HCT116 (cell line): ENCODE measurements at regions of chr11 and their contacts with region 1.

Region 1: GRCh38 chr11:128905345-128906184 is 14.4 kb downstream of the KCNJ5 start:
- DNase-seq: peak; percentile 46
- ATAC-seq: peak; percentile 75
- H3K4me3 ChIP-seq: peak overlapping the region; percentile 58 to 69
- H3K27ac ChIP-seq: peak overlapping the region; percentile 23; the same call in 1 of the 2 replicates
- H3K4me1 ChIP-seq: peaks cover 23 to 42% of the 10 kb centered on the region in 2 experiments
- H3K27me3 ChIP-seq: no peaks in the 10 kb centered on the region
- CTCF ChIP-seq: peak; percentile 24 to 70 (median 61); a peak in 5 of 6 replicates
- POLR2A ChIP-seq: no peak
- RAD21 ChIP-seq: peak; percentile 35

Region 2: DNA sequence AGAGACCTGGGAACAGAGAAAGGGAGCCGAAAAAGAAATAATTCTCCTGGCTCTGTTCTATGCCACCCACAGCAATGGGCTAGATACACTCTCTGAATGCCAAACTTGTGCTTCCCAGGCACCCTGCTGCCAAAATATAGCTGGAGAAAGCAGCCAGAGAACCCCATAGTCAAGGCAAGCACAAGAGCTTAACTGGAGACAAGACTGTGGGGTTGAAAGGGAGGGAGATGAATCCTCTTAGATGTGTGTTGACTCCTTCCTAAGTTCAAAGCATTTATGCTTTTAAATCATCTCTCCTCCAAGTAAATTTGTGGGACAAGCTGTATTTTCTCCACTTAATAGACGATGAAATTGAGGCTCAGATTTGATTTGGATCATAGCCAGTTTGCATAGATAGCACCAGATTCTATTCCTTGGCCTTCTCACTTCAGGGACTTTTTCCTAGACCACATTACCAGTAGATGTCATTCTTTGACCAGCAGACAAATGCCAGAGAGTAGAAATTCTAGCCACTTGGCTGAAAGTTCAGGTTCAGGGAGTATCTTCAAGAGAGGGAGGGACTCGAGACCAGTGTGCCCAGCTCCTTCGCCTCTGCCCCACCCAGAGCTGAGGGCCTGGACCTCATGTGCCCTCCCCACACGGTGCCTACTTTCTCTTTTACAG is 301.7 kb before region 1 on chr11:
- CTCF ChIA-PET with region 1: no interaction called
- POLR2A ChIA-PET with region 1: no interaction called
- RAD21 ChIA-PET with region 1: no interaction called
- intact Hi-C with region 1: no loop called
- DNase-seq: no peak
- ATAC-seq: no peak
- H3K4me3 ChIP-seq: no peak overlapping the region
- H3K27ac ChIP-seq: no peak overlapping the region
- H3K4me1 ChIP-seq: no peaks in the 10 kb centered on the region
- H3K27me3 ChIP-seq: peaks cover 58% of the 10 kb centered on the region
- CTCF ChIP-seq: no peak
- POLR2A ChIP-seq: no peak
- RAD21 ChIP-seq: 0 out of 2 replicates have a peak, but pooled peaks have one; percentile 5

Region 3: GRCh38 chr11:128757235-128757711 is 148.3 kb before region 1 on chr11:
- CTCF ChIA-PET with region 1: no interaction called
- POLR2A ChIA-PET with region 1: no interaction called
- RAD21 ChIA-PET with region 1: no interaction called
- intact Hi-C with region 1: no loop called
- DNase-seq: peak; percentile 3
- ATAC-seq: peak; percentile 79
- H3K4me3 ChIP-seq: no peak overlapping the region
- H3K27ac ChIP-seq: no peak overlapping the region
- H3K4me1 ChIP-seq: 0 out of 4 replicates have a peak, but pooled peaks cover 0 to 3% of the 10 kb centered on the region in 2 experiments
- H3K27me3 ChIP-seq: peaks cover 25% of the 10 kb centered on the region
- CTCF ChIP-seq: peak in 2 of 3 experiments; percentile 41 to 50; a peak in 4 of 6 replicates
- POLR2A ChIP-seq: no peak
- RAD21 ChIP-seq: no peak; the same call in 1 of the 2 replicates

Region 4: GRCh38 chr11:128890543-128891368 is 14.8 kb before region 1 on chr11 and contains the start of gene KCNJ5:
- CTCF ChIA-PET with region 1: interaction called, 55 read pairs
- POLR2A ChIA-PET with region 1: interaction called, 14 read pairs
- RAD21 ChIA-PET with region 1: interaction called in 1 of 2 experiments, 3 read pairs
- intact Hi-C with region 1: loop called (anchors 2 kb)
- DNase-seq: no peak
- ATAC-seq: peak; percentile 67
- H3K4me3 ChIP-seq: peak within 1 kb of the TSS; percentile 54 to 67
- H3K27ac ChIP-seq: no peak within 1 kb of the TSS; the same call in 1 of the 2 replicates
- H3K4me1 ChIP-seq: peaks cover 9 to 18% of the 10 kb centered on the region in 2 experiments; a peak in 3 of 4 replicates
- H3K27me3 ChIP-seq: no peaks in the 10 kb centered on the region
- CTCF ChIP-seq: no peak
- POLR2A ChIP-seq: no peak
- RAD21 ChIP-seq: no peak
- total RNA-seq, gene KCNJ5: 0.17 TPM